Transverse colon (tissue), 4 donors: ENCODE measurements at regions of chr14 and their contacts with region 1.

Region 1: GRCh38 chr14:50249136-50249800 is 17.9 kb upstream of the SOS2 start:
- DNase-seq: no peak
- H3K4me3 ChIP-seq: no peak overlapping the region
- H3K27ac ChIP-seq: no peak overlapping the region
- H3K4me1 ChIP-seq: no peaks in the 10 kb centered on the region
- H3K27me3 ChIP-seq: no peaks in the 10 kb centered on the region
- CTCF ChIP-seq: no peak
- EP300 ChIP-seq: no peak
- POLR2A ChIP-seq: no peak

Region 2: GRCh38 chr14:50270932-50271331 is 21.7 kb after region 1 on chr14:
- in situ Hi-C with region 1: no loop called
- intact Hi-C with region 1: loop called (anchors 1 kb)
- DNase-seq: no peak
- H3K4me3 ChIP-seq: no peak overlapping the region
- H3K27ac ChIP-seq: no peak overlapping the region
- H3K4me1 ChIP-seq: no peaks in the 10 kb centered on the region
- H3K27me3 ChIP-seq: no peaks in the 10 kb centered on the region
- CTCF ChIP-seq: no peak
- EP300 ChIP-seq: no peak
- POLR2A ChIP-seq: no peak